Endothelial cell of umbilical vein (primary cell): ENCODE measurements at regions of chr12 and their contacts with region 1.

Region 1: GRCh38 chr12:12837025-12837872 is 24.1 kb downstream of the DDX47 start:
- DNase-seq: peak; percentile 86
- H3K4me3 ChIP-seq: no peak overlapping the region
- H3K27ac ChIP-seq: peak overlapping the region; percentile 91
- H3K4me1 ChIP-seq: peaks cover 55% of the 10 kb centered on the region
- H3K27me3 ChIP-seq: no peaks in the 10 kb centered on the region
- CTCF ChIP-seq: peak; percentile 46 to 51
- POLR2A ChIP-seq: no peak

Region 2: GRCh38 chr12:12813120-12814101 is 23.8 kb before region 1 on chr12 and contains the start of gene DDX47:
- CTCF ChIA-PET with region 1: interaction called, 12 read pairs
- POLR2A ChIA-PET with region 1: no interaction called
- dilution Hi-C with region 1: no loop called
- intact Hi-C with region 1: loop called (anchors 1 kb)
- DNase-seq: peak; percentile 92
- H3K4me3 ChIP-seq: peak within 1 kb of the TSS; percentile 83 to 97 (median 94)
- H3K27ac ChIP-seq: peak within 1 kb of the TSS; percentile 94
- H3K4me1 ChIP-seq: peaks cover 23% of the 10 kb centered on the region
- H3K27me3 ChIP-seq: no peaks in the 10 kb centered on the region
- CTCF ChIP-seq: peak; percentile 96 to 99
- POLR2A ChIP-seq: peak; percentile 77
- total RNA-seq, gene DDX47: 74.6 and 75.2 TPM in 2 replicates

Region 3: GRCh38 chr12:12890815-12891645 is 53.8 kb after region 1 on chr12 and contains the start of gene GPRC5A:
- CTCF ChIA-PET with region 1: interaction called, 106 read pairs
- POLR2A ChIA-PET with region 1: interaction called, 21 read pairs
- dilution Hi-C with region 1: no loop called
- intact Hi-C with region 1: loop called (anchors 1 kb)
- DNase-seq: peak; percentile 96
- H3K4me3 ChIP-seq: peak within 1 kb of the TSS; percentile 42 to 55 (median 50)
- H3K27ac ChIP-seq: peak within 1 kb of the TSS; percentile 93
- H3K4me1 ChIP-seq: peaks cover 22% of the 10 kb centered on the region
- H3K27me3 ChIP-seq: no peaks in the 10 kb centered on the region
- CTCF ChIP-seq: peak in 1 of 2 donors; percentile 33
- POLR2A ChIP-seq: peak; percentile 86
- total RNA-seq, gene GPRC5A: 17.6 and 22.7 TPM in 2 replicates

Region 4: DNA sequence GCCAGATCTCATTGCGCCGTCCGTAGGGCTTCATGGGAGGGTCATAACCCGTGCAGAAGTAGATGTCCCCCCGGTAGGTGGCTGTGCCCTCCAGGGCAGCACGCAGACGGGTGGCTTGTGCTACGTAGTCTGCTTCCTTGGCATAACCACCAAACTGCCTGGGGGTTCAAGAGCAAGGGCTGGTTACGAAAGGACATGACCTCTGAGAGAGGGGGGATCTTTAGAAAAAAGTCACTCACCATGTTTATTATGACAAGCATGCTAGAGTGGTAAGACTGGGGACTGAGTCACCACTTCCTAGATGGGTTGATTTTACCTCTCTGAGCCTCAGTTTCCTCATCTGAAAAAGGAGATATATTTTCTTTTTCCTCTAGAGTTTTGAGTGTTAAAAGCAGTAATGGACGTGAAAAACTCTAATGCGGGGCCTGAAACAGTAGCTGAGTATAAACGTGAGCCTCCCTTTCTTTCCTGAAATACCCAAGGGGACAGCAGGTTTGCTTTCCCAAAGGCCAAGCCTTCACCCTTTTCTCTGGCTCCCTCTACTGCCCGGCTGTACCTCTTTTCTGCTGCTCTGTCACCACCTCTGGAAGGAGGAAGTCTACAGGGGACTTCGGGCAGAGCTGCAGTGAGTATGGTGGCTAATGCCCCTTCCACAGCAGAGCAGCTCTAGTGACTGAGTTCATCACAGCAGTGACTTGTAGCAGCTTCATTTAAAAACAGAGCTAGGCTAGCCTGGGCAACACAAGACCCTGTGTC is 138.3 kb after region 1 on chr12:
- CTCF ChIA-PET with region 1: interaction called, 40 read pairs
- POLR2A ChIA-PET with region 1: no interaction called
- dilution Hi-C with region 1: loop called (anchors 10 kb)
- intact Hi-C with region 1: loop called (anchors 1 kb)
- DNase-seq: peak; percentile 69
- H3K4me3 ChIP-seq: no peak overlapping the region
- H3K27ac ChIP-seq: peak overlapping the region; percentile 49
- H3K4me1 ChIP-seq: peaks cover 37% of the 10 kb centered on the region
- H3K27me3 ChIP-seq: no peaks in the 10 kb centered on the region
- CTCF ChIP-seq: peak; percentile 55 to 61
- POLR2A ChIP-seq: no peak

Region 5: DNA sequence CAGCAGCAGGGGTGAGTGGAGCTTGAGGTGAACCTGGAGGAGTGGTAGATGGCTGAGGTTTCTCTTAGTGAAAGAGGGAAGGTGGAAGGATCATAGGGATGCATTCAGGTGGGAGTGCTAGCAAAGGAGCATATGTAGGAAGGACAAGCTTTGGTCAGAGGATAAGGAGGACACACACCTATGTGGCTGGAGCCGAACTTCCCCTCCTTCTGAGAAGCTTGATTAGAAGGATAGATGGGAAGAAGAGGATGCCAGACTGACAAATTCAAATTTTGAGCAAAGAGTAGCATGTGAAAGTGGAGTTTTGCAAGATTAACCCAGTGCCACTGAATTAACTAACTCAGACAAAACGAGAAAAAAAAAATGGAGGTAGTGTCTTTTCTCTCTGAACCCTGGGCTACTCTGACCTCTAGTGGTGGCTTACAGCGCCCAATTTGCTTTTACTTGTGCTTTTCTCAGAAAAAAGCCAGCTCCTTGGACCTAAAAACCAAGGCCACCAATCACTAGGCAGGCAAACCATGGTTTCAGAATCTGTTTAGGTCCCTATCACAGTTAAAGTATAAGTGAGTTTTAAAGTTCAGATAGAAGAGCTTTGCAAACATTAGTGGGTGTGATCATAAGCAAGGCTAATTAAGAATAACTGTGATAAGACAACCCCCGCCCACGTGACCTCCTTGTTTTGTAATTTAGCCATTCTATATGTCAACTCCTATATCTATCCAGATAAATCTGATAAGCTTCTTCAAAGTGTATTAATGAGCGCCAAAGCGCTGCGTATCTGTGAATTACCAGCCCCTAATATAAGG is 374.8 kb after region 1 on chr12:
- CTCF ChIA-PET with region 1: interaction called, 16 read pairs
- POLR2A ChIA-PET with region 1: no interaction called
- dilution Hi-C with region 1: no loop called
- intact Hi-C with region 1: loop called (anchors 2 kb)
- DNase-seq: peak; percentile 70
- H3K4me3 ChIP-seq: no peak overlapping the region
- H3K27ac ChIP-seq: peak overlapping the region; percentile 54
- H3K4me1 ChIP-seq: peaks cover 49% of the 10 kb centered on the region
- H3K27me3 ChIP-seq: no peaks in the 10 kb centered on the region
- CTCF ChIP-seq: peak; percentile 72 to 76
- POLR2A ChIP-seq: no peak